Heart right ventricle (tissue), 16 donors: ENCODE measurements at regions of chr3 and their contacts with region 1.

Region 1: GRCh38 chr3:170689893-170690660 is 104.2 kb upstream of the SLC7A14 start:
- DNase-seq: peak; percentile 57 to 72
- ATAC-seq: peak in 7 of 8 donors; percentile 51 to 84 (median 73)
- H3K4me3 ChIP-seq: no peak overlapping the region
- H3K27ac ChIP-seq: no peak overlapping the region
- H3K4me1 ChIP-seq: peaks cover 0 to 5% (median 0%) of the 10 kb centered on the region in 9 donors
- H3K27me3 ChIP-seq: no peaks in the 10 kb centered on the region
- CTCF ChIP-seq: peak; percentile 48 to 84 (median 78)

Region 2: DNA sequence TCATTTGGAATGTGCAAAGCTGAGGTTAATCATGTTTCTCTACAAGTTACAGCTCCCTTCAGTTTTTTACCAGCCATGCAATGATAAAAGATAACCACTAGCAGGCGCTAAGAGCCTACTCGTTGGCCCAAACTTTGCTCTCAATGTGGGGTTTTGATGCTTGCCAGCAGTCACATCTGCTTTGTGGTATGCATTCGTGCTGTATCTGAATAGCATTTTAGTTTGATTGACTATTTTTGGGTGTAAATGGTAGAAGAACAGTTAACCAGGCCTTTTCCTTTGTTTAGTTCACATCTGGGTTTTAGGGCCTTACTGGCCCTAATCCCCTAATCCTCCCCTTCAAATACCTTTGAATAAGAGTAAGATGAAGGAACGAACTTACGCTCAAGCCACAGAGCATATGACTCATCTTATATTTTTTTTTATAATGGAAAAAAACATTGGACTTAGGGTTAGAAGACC is 275.8 kb before region 1 on chr3:
- intact Hi-C with region 1: loop called (anchors 1 to 10 kb)
- DNase-seq: peak in 1 of 2 donors; percentile 25
- ATAC-seq: peak in 5 of 8 donors; percentile 29 to 51 (median 42)
- H3K4me3 ChIP-seq: no peak overlapping the region
- H3K27ac ChIP-seq: no peak overlapping the region
- H3K4me1 ChIP-seq: peaks cover 1 to 17% (median 12%) of the 10 kb centered on the region in 9 donors
- H3K27me3 ChIP-seq: peaks cover 0 to 38% (median 31%) of the 10 kb centered on the region in 7 donors
- CTCF ChIP-seq: peak; percentile 82 to 98 (median 92)

Region 3: DNA sequence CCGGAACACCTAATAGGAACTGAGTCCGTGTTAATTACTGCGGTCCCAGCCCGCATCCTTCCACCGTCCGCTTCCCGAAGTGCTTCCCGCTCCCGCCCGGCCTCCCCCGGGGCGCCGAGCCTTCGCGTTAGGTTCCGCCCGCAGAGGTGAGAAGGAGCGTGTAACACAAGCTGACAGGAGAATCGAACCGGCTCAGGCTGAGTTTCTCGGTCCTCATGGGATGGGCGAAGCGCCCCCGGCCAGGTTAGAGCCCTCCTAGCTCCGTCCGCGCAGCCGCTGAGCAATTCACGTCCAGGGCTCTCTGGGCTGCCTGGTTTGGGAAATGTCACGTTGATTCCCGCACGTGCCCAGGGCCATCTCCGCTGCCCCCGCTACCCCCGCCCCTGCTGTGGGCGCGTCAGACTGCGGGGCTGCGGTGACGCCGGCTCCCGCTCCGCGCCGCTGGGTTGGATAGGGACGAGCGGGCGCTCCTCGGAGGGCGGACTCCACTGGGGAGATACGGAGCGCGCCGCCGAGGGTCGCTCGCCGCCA is 270.5 kb before region 1 on chr3:
- intact Hi-C with region 1: loop called (anchors 1 to 10 kb)
- DNase-seq: peak; percentile 19 to 20
- ATAC-seq: peak; percentile 43 to 72 (median 60)
- H3K4me3 ChIP-seq: peak overlapping the region; percentile 5 to 63 (median 48)
- H3K27ac ChIP-seq: peak overlapping the region in 7 of 10 donors; percentile 2 to 79 (median 54)
- H3K4me1 ChIP-seq: peaks cover 12 to 39% (median 28%) of the 10 kb centered on the region in 9 donors
- H3K27me3 ChIP-seq: peaks cover 0 to 53% (median 39%) of the 10 kb centered on the region in 7 donors
- CTCF ChIP-seq: no peak

Region 4: GRCh38 chr3:170553788-170554757 is 136.0 kb before region 1 on chr3:
- intact Hi-C with region 1: loop called in 7 of 10 experiments (anchors 5 to 10 kb)
- DNase-seq: no peak
- ATAC-seq: no peak
- H3K4me3 ChIP-seq: no peak overlapping the region
- H3K27ac ChIP-seq: no peak overlapping the region
- H3K4me1 ChIP-seq: no peaks in the 10 kb centered on the region
- H3K27me3 ChIP-seq: no peaks in the 10 kb centered on the region
- CTCF ChIP-seq: peak in 5 of 9 donors; percentile 16 to 51 (median 42)

Region 5: DNA sequence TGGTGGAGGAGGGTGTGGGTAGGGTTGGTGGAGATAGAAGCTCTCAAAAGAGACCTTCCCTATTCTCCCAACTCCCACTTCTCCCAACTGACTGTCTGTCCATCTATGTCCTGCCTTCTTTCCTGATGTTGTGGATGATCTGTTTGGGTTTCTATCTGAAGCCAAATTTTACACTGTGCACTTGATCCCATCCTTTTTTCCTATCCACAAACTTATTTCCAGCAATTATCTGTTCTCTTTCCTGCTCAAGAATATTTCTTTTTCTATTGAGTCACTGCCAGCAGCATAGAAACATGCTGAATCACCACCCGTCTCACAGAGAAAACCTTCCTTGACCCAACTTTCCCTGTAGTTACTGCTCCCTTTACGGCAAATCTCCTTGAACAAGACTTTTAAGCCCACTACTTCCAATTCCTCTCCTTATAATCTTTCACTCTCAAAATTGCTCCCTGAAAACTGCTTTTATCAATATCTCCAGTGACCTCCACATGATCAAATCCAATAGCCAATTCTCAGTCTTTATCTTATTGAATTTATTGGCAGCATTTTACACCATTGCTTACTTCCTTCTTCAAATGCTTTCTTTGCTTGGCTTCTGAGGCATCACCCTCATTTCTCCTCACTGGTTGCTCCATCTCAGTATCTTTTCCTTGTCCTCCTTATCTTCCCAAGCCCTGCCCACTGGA is 37.0 kb after region 1 on chr3:
- intact Hi-C with region 1: no loop called
- DNase-seq: no peak
- ATAC-seq: peak in 1 of 8 donors; percentile 46
- H3K4me3 ChIP-seq: no peak overlapping the region
- H3K27ac ChIP-seq: peak overlapping the region in 4 of 10 donors; percentile 4 to 62 (median 34)
- H3K4me1 ChIP-seq: peaks cover 0 to 4% (median 0%) of the 10 kb centered on the region in 9 donors
- H3K27me3 ChIP-seq: peaks cover 0 to 7% (median 0%) of the 10 kb centered on the region in 7 donors
- CTCF ChIP-seq: no peak